ENCODE measurements at regions of chr12 and their contacts with region 1.

Region 1: GRCh38 chr12:14930299-14930698 is 8.0 kb downstream of the ERP27 start:
- DNase-seq: no peak
- H3K4me3 Mint-ChIP-seq: no peak overlapping the region
- H3K27ac Mint-ChIP-seq: no peak overlapping the region
- H3K4me1 Mint-ChIP-seq: peaks cover 64% of the 10 kb centered on the region
- H3K27me3 Mint-ChIP-seq: no peaks in the 10 kb centered on the region
- CTCF ChIP-seq: no peak

Region 2: DNA sequence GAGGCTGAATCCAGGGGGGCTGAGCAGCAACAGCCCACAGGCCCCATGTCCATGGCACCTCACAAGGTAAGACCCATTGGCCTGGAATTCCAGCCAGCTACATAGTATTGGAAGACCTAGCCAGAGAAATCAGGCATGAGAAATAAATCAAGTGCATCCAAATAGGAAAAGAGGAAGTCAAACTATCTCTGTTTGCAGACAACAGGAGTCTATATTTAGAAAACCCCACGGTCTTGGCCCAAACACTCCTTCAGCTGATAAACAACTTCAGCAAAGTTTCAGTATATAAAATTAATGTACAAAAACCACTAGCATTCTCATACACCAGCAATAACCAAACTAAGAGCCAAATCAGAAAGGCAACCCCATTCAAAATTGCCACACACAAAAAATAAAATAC is 59.5 kb after region 1 on chr12:
- CTCF ChIA-PET with region 1: no interaction called
- intact Hi-C with region 1: loop called (anchors 5 kb)
- DNase-seq: no peak
- H3K4me3 Mint-ChIP-seq: no peak overlapping the region
- H3K27ac Mint-ChIP-seq: no peak overlapping the region
- H3K4me1 Mint-ChIP-seq: peaks cover 18% of the 10 kb centered on the region
- H3K27me3 Mint-ChIP-seq: no peaks in the 10 kb centered on the region
- CTCF ChIP-seq: no peak

Region 3: GRCh38 chr12:15092826-15093225 is 162.5 kb after region 1 on chr12:
- CTCF ChIA-PET with region 1: no interaction called
- intact Hi-C with region 1: no loop called
- DNase-seq: no peak
- H3K4me3 Mint-ChIP-seq: no peak overlapping the region
- H3K27ac Mint-ChIP-seq: no peak overlapping the region
- H3K4me1 Mint-ChIP-seq: no peaks in the 10 kb centered on the region
- H3K27me3 Mint-ChIP-seq: peaks cover 13% of the 10 kb centered on the region
- CTCF ChIP-seq: no peak